AG04450 (cell line): ENCODE measurements at regions of chr7 and their contacts with region 1.

Region 1: GRCh38 chr7:7681179-7681935 is 37.0 kb downstream of the RPA3 start:
- DNase-seq: no peak
- H3K4me3 ChIP-seq: no peak overlapping the region
- H3K27ac ChIP-seq: no peak overlapping the region
- H3K27me3 ChIP-seq: no peaks in the 10 kb centered on the region
- CTCF ChIP-seq: peak; percentile 70

Region 2: GRCh38 chr7:6453734-6454133 is 1227.6 kb before region 1 on chr7:
- CTCF ChIA-PET with region 1: no interaction called
- POLR2A ChIA-PET with region 1: no interaction called
- DNase-seq: no peak
- H3K4me3 ChIP-seq: no peak overlapping the region
- H3K27ac ChIP-seq: peak overlapping the region; percentile 61
- H3K27me3 ChIP-seq: no peaks in the 10 kb centered on the region
- CTCF ChIP-seq: no peak

Region 3: GRCh38 chr7:6637544-6638229 is 1043.7 kb before region 1 on chr7:
- CTCF ChIA-PET with region 1: no interaction called
- POLR2A ChIA-PET with region 1: no interaction called
- DNase-seq: no peak
- H3K4me3 ChIP-seq: peak overlapping the region; percentile 71
- H3K27ac ChIP-seq: no peak overlapping the region
- H3K27me3 ChIP-seq: no peaks in the 10 kb centered on the region
- CTCF ChIP-seq: peak; percentile 43

Region 4: GRCh38 chr7:7385421-7385820 is 295.9 kb before region 1 on chr7:
- CTCF ChIA-PET with region 1: no interaction called
- POLR2A ChIA-PET with region 1: no interaction called
- DNase-seq: no peak
- H3K4me3 ChIP-seq: no peak overlapping the region
- H3K27ac ChIP-seq: no peak overlapping the region
- H3K27me3 ChIP-seq: no peaks in the 10 kb centered on the region
- CTCF ChIP-seq: no peak

Region 5: DNA sequence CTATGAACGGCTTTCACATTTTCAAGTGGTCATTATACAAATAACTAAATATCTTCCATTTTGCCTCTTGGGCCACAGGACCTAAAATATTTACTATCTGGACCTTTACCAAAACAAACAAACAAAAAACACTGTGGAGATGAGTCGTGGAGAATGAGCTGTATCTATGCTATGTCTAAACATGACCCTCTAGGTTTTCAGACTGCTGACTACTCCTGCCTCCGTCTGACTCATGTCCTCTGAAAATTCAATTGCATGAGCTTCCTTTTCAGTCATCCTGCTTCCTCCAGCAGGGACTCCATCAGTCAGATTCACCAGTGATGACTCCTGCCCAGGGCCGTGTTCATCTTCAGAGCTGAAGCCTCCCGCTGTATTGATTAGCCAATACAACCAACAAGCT is 242.5 kb before region 1 on chr7:
- CTCF ChIA-PET with region 1: no interaction called
- POLR2A ChIA-PET with region 1: no interaction called
- DNase-seq: peak; percentile 95
- H3K4me3 ChIP-seq: no peak overlapping the region
- H3K27ac ChIP-seq: peak overlapping the region; percentile 86
- H3K27me3 ChIP-seq: no peaks in the 10 kb centered on the region
- CTCF ChIP-seq: 0 out of 2 replicates have a peak, but pooled peaks have one; percentile 24

Region 6: DNA sequence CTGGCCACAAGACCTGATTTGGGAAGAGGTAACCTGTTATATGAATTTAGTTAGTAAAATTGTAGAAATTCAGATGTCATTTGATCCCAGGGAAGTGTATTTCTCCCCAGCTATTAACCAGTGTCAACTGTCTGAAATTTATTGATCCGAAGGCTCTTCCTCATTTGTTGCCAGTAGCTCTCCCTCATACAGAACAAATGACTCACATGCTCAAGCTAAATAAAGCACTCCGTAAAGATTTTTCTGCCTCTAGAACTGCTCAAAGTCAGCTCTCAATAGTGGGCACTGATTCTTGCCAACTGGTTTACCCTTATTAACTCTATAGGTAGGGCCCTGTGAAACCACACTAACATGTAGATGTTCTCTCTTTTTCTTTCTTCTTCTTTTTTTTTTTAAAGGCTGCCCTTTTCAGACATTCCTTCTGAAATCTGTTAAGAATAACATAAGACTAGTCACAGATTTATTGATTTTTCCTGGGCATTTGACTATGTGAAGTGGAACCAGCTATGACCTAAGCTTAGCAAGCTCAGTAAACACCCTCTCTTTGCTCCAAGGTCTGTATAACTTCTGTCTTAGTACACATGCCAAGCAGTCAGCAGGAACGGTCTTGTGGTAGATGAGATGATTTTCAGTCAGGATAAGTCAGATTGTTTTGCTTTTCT is 15.2 kb after region 1 on chr7:
- CTCF ChIA-PET with region 1: interaction called, 63 read pairs
- POLR2A ChIA-PET with region 1: no interaction called
- DNase-seq: no peak
- H3K4me3 ChIP-seq: no peak overlapping the region
- H3K27ac ChIP-seq: no peak overlapping the region
- H3K27me3 ChIP-seq: no peaks in the 10 kb centered on the region
- CTCF ChIP-seq: no peak

Region 7: DNA sequence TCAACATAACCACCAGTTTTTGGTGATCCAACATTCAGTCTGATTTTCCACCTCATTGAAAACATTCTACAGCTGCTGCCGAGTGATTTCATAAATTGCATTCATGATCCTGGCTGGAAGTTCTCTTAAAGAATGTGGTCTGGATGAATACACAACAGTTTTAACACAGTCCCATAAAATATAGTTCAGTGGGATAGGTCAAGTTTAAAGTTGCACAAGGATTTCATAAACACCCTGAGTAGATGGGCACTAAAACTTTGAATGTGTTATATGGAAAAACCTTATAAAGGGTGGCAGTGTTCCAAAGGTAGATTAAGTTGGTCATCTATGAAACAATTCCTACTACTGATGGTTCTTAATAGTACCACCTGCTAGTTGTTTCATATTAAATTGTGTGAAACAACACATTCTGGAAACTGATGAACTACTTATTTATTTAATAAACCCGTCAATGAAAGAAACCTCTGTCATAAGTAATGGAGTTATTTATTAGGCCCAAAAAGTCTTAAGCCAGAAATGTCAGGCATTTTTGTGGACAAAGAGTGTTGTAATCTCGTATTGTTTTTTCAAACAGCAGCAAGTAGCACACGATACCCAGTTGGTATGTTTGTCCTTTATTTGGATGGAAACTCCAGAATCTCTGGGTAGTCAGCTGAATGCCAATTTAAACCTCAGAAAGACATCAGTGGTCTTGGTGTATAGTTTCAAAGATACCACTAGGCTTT is 51.4 kb after region 1 on chr7:
- CTCF ChIA-PET with region 1: interaction called, 11 read pairs
- POLR2A ChIA-PET with region 1: no interaction called
- DNase-seq: no peak
- H3K4me3 ChIP-seq: no peak overlapping the region
- H3K27ac ChIP-seq: no peak overlapping the region
- H3K27me3 ChIP-seq: no peaks in the 10 kb centered on the region
- CTCF ChIP-seq: no peak

Region 8: DNA sequence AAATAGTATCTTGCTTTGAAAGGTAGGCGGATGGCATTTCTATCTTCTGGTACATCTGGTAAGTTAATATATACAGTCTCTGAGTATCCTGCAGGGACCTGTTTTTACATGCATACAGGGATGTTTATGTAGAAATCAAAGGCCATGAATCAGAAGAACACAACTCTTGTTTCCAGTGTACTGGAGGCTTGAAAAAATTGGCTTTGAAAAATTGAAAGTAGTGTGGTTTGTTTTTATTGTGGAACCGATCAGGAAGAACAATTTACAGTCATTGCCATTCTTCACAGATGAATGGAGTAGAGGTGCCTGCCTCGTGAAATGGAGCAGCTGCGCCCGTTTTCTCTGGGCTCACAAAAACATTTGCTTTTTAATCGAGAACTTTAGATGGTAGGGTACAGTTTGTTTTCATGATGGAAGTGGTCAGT is 91.1 kb after region 1 on chr7:
- CTCF ChIA-PET with region 1: interaction called, 19 read pairs
- POLR2A ChIA-PET with region 1: no interaction called
- DNase-seq: no peak
- H3K4me3 ChIP-seq: peak overlapping the region; percentile 21
- H3K27ac ChIP-seq: no peak overlapping the region
- H3K27me3 ChIP-seq: no peaks in the 10 kb centered on the region
- CTCF ChIP-seq: no peak

Region 9: DNA sequence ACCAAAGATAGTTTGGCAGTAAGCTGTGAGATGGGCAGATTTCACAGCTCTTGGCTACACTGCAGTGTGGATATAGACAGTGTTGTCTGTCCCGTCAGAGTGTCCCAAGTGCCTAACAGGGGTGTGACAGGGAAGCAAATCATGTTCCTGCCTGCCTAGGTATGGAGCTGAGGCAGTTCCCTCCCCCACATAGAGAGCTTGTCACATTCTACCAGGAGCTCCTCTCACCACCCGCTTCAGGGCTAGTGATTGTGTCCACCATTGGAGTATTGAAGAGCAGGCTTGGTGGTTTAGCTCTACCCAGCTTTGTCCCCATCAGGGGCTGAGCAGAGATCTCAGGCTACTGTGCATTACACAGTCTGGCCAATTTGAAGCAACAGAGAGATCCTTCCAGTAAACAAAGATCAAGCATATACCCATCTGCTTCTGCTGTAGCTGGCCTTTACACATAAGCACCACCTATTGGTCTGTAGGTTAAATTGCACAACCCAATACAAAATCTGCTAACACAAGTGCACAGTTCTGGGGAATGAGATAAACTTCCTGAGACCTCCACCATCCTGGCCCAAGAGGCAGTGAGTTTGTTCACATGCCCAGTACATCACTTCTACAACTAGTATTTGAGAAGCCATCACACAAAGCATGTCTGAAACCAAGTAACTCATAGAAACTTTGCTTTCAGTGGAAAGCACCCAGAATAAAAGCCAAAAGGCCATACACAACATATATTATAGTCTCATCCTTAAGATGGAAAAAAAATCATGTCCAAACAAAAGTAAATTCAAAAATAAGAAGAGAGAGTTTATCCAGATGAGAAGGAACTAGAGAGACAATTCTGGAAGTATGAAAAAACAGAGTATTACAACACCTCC is 354.5 kb after region 1 on chr7:
- CTCF ChIA-PET with region 1: interaction called, 26 read pairs
- POLR2A ChIA-PET with region 1: no interaction called
- DNase-seq: peak; percentile 20
- H3K4me3 ChIP-seq: no peak overlapping the region
- H3K27ac ChIP-seq: no peak overlapping the region
- H3K27me3 ChIP-seq: no peaks in the 10 kb centered on the region
- CTCF ChIP-seq: peak; percentile 64

Region 10: DNA sequence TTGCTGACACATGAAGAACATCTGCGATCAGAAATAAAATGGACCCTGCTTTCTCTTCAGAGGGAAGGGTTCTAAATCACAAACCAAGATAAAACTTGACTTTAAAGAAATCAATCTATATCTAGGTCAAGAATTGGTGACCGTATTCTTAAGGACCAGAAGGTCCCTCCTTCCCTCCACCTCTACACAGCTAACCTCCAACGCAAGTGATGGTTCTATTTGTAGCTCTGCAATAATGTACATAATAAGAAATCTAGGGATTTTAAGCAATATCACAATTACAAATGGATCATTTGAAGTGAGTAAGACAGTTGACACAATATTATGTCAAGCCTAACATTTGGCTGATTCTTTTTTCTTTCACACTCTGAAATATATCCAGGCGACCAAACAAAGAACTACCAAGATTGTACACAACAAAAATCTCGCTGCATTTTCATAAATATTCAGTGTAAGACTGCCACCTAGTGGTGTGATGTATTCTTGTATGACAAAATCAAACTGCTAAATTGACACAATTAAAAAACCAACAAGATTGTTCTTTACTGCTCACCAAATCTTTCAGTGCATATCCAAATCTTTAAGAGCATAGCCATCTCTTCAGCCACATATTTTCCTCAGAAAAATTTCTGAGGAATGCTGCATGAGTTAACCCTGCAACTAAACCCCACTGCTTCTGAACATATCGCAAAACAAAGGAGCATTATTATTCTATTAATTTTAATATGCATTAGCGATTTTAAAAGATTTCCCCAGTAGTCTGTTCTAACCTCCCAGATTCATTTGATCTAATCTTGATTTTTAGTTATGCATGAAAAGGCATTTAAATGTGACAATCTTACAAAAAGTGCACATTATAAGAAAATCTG is 536.1 kb after region 1 on chr7:
- CTCF ChIA-PET with region 1: interaction called, 18 read pairs
- POLR2A ChIA-PET with region 1: no interaction called
- DNase-seq: peak; percentile 48
- H3K4me3 ChIP-seq: no peak overlapping the region
- H3K27ac ChIP-seq: no peak overlapping the region
- H3K27me3 ChIP-seq: no peaks in the 10 kb centered on the region
- CTCF ChIP-seq: peak; percentile 58